Activated CD4-positive, alpha-beta T cell treated with anti-CD3 and anti-CD28 coated beads, Interleukin-2, amount 10 ng/mL, durations not matched to agents 7 days and 5 days (primary cell): ENCODE measurements at regions of chr6 and their contacts with region 1.

Region 1: GRCh38 chr6:11414176-11414963 is 123.2 kb upstream of the TMEM170B start:
- DNase-seq: peak; percentile 48
- H3K4me3 Mint-ChIP-seq: no peak overlapping the region
- H3K27ac Mint-ChIP-seq: peak overlapping the region; percentile 44
- H3K4me1 Mint-ChIP-seq: peaks cover 47% of the 10 kb centered on the region
- H3K27me3 Mint-ChIP-seq: no peaks in the 10 kb centered on the region

Region 2: GRCh38 chr6:11428895-11429294 is 14.5 kb after region 1 on chr6:
- CTCF ChIA-PET with region 1: interaction called, 20 read pairs
- POLR2A ChIA-PET with region 1: no interaction called
- DNase-seq: no peak
- H3K4me3 Mint-ChIP-seq: no peak overlapping the region
- H3K27ac Mint-ChIP-seq: no peak overlapping the region
- H3K4me1 Mint-ChIP-seq: peaks cover 17% of the 10 kb centered on the region
- H3K27me3 Mint-ChIP-seq: no peaks in the 10 kb centered on the region